ENCODE measurements at regions of chr12 and their contacts with region 1.

Region 1: DNA sequence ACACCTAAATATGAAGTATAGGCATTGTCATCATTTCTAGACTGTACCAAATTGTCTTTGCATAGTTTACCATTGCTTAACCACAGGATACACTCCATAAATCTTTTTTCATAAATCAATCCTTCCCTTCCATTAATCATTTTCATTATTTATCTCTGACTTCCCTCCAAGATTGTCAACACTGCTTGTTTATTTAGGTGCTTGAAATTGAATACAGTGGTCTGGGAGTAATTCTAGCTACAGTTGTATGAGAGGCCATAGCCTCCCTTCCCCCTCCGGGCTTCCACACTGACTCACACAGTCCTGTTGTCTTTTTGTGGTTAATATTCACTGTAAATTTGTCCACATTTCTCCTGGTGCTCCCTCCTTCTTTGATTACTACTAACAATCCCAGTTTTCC is 114.2 kb upstream of the ARID2 start:
- DNase-seq: no peak
- H3K4me3 ChIP-seq: no peak overlapping the region
- H3K27ac ChIP-seq: no peak overlapping the region
- H3K4me1 ChIP-seq: no peaks in the 10 kb centered on the region
- CTCF ChIP-seq: no peak

Region 2: GRCh38 chr12:45670346-45671065 is 55.2 kb after region 1 on chr12:
- CTCF ChIA-PET with region 1: no interaction called
- POLR2A ChIA-PET with region 1: no interaction called
- intact Hi-C with region 1: loop called (anchors 5 kb)
- DNase-seq: no peak
- H3K4me3 ChIP-seq: no peak overlapping the region
- H3K27ac ChIP-seq: no peak overlapping the region
- H3K4me1 ChIP-seq: no peaks in the 10 kb centered on the region
- CTCF ChIP-seq: no peak

Measured in OCI-LY7 (cell line).